CD4-positive, alpha-beta T cell (primary cell): ENCODE measurements at regions of chr15 and their contacts with region 1.

Region 1: DNA sequence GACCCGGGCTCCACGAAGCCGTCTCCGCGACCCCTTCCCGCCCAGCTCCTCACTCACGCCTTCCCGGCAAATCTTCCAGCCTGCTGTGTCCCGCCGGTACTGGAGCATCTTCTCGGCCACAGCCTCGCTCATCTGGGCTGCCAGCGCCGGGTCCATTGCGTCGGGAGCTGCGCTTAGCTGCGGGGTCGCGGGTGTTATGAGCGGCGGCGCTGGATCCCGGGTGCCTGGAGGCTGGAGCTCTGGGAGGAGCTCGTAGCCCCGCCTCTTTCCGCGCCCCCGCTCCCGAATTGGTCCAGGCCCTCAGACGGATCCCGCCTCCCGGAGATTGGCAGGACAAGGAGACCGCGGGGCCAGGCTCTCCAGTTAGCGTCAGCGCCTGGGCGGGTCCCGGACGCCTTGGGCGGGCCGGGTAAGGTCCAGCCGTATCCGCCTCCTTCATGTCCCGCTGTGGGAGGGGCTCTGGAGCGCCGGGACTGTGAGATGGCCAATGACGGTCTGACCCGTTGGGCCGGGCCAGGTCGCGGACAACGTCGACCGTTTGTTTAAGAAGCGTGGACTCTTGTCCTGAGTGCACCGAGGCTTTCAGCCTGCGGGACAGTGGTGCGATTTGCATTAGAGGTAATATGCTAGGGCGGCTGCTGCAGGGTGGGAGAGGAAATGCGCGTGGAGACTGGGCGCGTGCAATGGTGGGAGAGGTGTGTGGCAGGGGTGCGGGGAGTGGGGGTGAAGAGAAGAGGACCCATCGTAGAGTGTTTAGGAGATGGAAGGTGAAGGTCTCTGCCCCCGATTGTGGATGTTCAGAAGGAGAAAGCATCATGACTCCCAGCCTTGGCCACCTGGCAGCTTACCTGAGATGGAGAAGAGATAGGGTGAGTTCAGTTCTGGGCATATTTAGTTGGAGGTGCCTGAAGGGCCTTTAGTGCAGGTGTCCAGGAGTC is at the start of gene STARD5:
- DNase-seq: peak; percentile 87 to 98 (median 95)
- ATAC-seq: peak; percentile 96
- H3K4me3 ChIP-seq: peak within 1 kb of the TSS; percentile 65
- H3K4me3 Mint-ChIP-seq: peak within 1 kb of the TSS; percentile 93
- H3K27ac ChIP-seq: peak within 1 kb of the TSS in 1 of 2 donors; percentile 52
- H3K27ac Mint-ChIP-seq: peak within 1 kb of the TSS; percentile 83
- H3K4me1 ChIP-seq: peaks cover 26% of the 10 kb centered on the region
- H3K4me1 Mint-ChIP-seq: peaks cover 52% of the 10 kb centered on the region
- H3K27me3 ChIP-seq: no peaks in the 10 kb centered on the region
- H3K27me3 Mint-ChIP-seq: no peaks in the 10 kb centered on the region
- CTCF ChIP-seq: no peak
- total RNA-seq, gene STARD5: 9.7 to 9.8 TPM

Region 2: GRCh38 chr15:81286621-81287121 is 37.5 kb before region 1 on chr15:
- CTCF ChIA-PET with region 1: interaction called, 3 read pairs
- POLR2A ChIA-PET with region 1: interaction called, 26 read pairs
- intact Hi-C with region 1: loop called in 1 of 2 experiments (anchors 5 kb)
- DNase-seq: peak in 3 of 14 experiments; percentile 65 to 68 (median 68)
- ATAC-seq: peak; percentile 94
- H3K4me3 ChIP-seq: peak overlapping the region; percentile 5
- H3K4me3 Mint-ChIP-seq: peak overlapping the region; percentile 45
- H3K27ac ChIP-seq: peak overlapping the region; percentile 80 to 84
- H3K27ac Mint-ChIP-seq: peak overlapping the region; percentile 92
- H3K4me1 ChIP-seq: peaks cover 71% of the 10 kb centered on the region
- H3K4me1 Mint-ChIP-seq: peaks cover 79% of the 10 kb centered on the region
- H3K27me3 ChIP-seq: no peaks in the 10 kb centered on the region
- H3K27me3 Mint-ChIP-seq: no peaks in the 10 kb centered on the region
- CTCF ChIP-seq: no peak

Region 3: GRCh38 chr15:81296673-81297072 is 27.5 kb before region 1 on chr15:
- CTCF ChIA-PET with region 1: interaction called, 3 read pairs
- POLR2A ChIA-PET with region 1: interaction called, 32 read pairs
- intact Hi-C with region 1: loop called (anchors 1 to 2 kb)
- DNase-seq: peak; percentile 57 to 93 (median 73)
- ATAC-seq: peak; percentile 45
- H3K4me3 ChIP-seq: peak overlapping the region; percentile 96
- H3K4me3 Mint-ChIP-seq: peak overlapping the region; percentile 99
- H3K27ac ChIP-seq: peak overlapping the region; percentile 94 to 95
- H3K27ac Mint-ChIP-seq: peak overlapping the region; percentile 92
- H3K4me1 ChIP-seq: peaks cover 73% of the 10 kb centered on the region
- H3K4me1 Mint-ChIP-seq: peaks cover 68% of the 10 kb centered on the region
- H3K27me3 ChIP-seq: no peaks in the 10 kb centered on the region
- H3K27me3 Mint-ChIP-seq: no peaks in the 10 kb centered on the region
- CTCF ChIP-seq: no peak

Region 4: DNA sequence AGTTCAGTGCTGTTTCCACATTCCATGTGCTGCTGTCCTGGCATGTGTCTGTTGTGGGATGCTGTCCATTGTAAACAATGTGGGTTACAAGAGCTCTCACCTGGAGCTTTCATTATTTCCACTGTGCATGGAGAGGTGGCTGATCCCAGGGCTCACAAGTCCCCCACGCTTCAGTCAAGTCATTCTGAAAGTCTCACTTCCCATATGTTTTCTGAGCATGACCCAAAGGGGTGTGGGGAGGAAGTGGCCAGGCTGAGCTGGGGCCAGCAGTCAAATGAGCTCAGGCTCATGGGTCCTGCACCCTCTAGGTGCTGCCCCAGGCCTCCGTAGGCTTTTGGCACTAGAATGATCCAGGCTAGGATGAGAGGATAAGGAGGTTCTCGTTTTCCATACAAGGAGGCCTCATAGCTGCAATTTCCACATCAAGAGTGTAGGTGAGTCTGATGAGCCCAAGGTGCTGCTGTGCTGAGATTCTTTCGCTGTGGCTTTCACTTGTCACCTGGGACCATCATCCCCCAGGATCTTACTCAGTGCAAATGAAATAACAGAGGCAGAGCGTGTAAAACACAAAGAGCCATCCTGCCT is 22.3 kb before region 1 on chr15:
- CTCF ChIA-PET with region 1: interaction called, 3 read pairs
- POLR2A ChIA-PET with region 1: interaction called, 71 read pairs
- intact Hi-C with region 1: loop called in 1 of 2 experiments (anchors 2 kb)
- DNase-seq: peak in 4 of 14 experiments; percentile 21 to 61 (median 60)
- ATAC-seq: no peak
- H3K4me3 ChIP-seq: peak overlapping the region; percentile 96
- H3K4me3 Mint-ChIP-seq: peak overlapping the region; percentile 99
- H3K27ac ChIP-seq: peak overlapping the region; percentile 61 to 95
- H3K27ac Mint-ChIP-seq: peak overlapping the region; percentile 92
- H3K4me1 ChIP-seq: peaks cover 71% of the 10 kb centered on the region
- H3K4me1 Mint-ChIP-seq: peaks cover 66% of the 10 kb centered on the region
- H3K27me3 ChIP-seq: no peaks in the 10 kb centered on the region
- H3K27me3 Mint-ChIP-seq: no peaks in the 10 kb centered on the region
- CTCF ChIP-seq: no peak

Region 5: GRCh38 chr15:81312790-81313543 is 11.2 kb before region 1 on chr15:
- CTCF ChIA-PET with region 1: no interaction called
- POLR2A ChIA-PET with region 1: interaction called, 71 read pairs
- intact Hi-C with region 1: loop called in 1 of 2 experiments (anchors 1 kb)
- DNase-seq: peak in 2 of 14 experiments; percentile 59 to 69
- ATAC-seq: no peak
- H3K4me3 ChIP-seq: no peak overlapping the region
- H3K4me3 Mint-ChIP-seq: no peak overlapping the region
- H3K27ac ChIP-seq: peak overlapping the region in 1 of 2 donors; percentile 67
- H3K27ac Mint-ChIP-seq: peak overlapping the region; percentile 92
- H3K4me1 ChIP-seq: peaks cover 68% of the 10 kb centered on the region
- H3K4me1 Mint-ChIP-seq: peaks cover 85% of the 10 kb centered on the region
- H3K27me3 ChIP-seq: no peaks in the 10 kb centered on the region
- H3K27me3 Mint-ChIP-seq: no peaks in the 10 kb centered on the region
- CTCF ChIP-seq: no peak

Region 6: GRCh38 chr15:81604713-81605112 is 280.5 kb after region 1 on chr15:
- CTCF ChIA-PET with region 1: no interaction called
- POLR2A ChIA-PET with region 1: no interaction called
- intact Hi-C with region 1: no loop called
- DNase-seq: no peak
- ATAC-seq: no peak
- H3K4me3 ChIP-seq: no peak overlapping the region
- H3K4me3 Mint-ChIP-seq: no peak overlapping the region
- H3K27ac ChIP-seq: no peak overlapping the region
- H3K27ac Mint-ChIP-seq: no peak overlapping the region
- H3K4me1 ChIP-seq: no peaks in the 10 kb centered on the region
- H3K4me1 Mint-ChIP-seq: no peaks in the 10 kb centered on the region
- H3K27me3 ChIP-seq: no peaks in the 10 kb centered on the region
- H3K27me3 Mint-ChIP-seq: peaks cover 10% of the 10 kb centered on the region
- CTCF ChIP-seq: no peak